Activated CD4-positive, alpha-beta memory T cell treated with anti-CD3 and anti-CD28 coated beads for 36 hours (primary cell): ENCODE measurements at regions of chr3 and their contacts with region 1.

Region 1: GRCh38 chr3:123201566-123202427 is at the start of gene SEC22A:
- DNase-seq: peak; percentile 97
- H3K4me3 Mint-ChIP-seq: peak within 1 kb of the TSS; percentile 87
- H3K27ac Mint-ChIP-seq: peak within 1 kb of the TSS; percentile 86
- H3K4me1 Mint-ChIP-seq: peaks cover 23% of the 10 kb centered on the region
- H3K27me3 Mint-ChIP-seq: no peaks in the 10 kb centered on the region
- total RNA-seq, gene SEC22A: 19.6 to 21.5 TPM

Region 2: DNA sequence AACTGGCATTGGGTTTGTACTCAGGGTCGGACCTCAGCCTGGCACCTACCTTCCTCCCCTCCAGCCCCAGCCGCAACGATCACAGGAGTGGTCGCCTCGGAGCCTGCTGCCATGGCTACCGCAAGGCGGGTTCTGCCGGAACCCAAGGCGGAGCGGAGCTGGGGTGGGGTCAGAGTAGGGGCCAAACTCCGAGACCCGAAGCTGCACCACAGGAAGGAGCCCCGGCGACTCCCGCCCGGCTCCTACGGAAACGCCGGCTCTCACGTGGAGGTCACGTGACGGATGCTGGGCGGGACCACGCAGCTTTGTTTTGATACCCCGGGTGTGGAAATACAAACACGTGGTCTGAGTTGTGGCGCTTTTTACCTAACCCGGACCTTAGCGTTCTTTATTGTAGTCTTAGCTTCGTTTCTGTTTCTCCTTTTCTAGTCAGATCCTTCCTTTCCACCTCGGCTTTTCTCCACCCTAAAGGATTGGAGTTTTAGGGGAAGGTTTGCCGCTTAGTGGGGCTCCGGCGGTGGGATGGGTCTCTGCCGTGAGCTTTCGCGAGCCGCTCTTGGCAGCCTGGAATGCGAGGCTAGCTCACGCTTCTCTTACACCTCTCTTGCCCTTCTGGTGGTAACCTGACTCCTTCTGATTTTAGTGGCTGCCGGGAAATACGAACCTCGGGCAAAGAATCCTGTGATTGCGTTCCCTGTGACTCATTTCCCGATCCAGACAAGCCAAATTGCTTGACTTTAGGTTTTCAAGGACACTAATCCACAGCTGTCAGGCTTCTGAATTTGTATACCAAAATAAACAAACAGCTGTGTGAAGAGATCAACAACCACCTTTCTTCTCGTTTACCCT is 408.0 kb before region 1 on chr3 and contains the start of gene HSPBAP1:
- CTCF ChIA-PET with region 1: no interaction called
- POLR2A ChIA-PET with region 1: no interaction called
- intact Hi-C with region 1: loop called (anchors 5 kb)
- DNase-seq: peak; percentile 93
- H3K4me3 Mint-ChIP-seq: peak within 1 kb of the TSS; percentile 85
- H3K27ac Mint-ChIP-seq: peak within 1 kb of the TSS; percentile 82
- H3K4me1 Mint-ChIP-seq: peaks cover 29% of the 10 kb centered on the region
- H3K27me3 Mint-ChIP-seq: no peaks in the 10 kb centered on the region
- total RNA-seq, gene HSPBAP1: 4.8 TPM

Region 3: GRCh38 chr3:123066896-123067688 is 134.7 kb before region 1 on chr3 and contains the start of gene PDIA5:
- CTCF ChIA-PET with region 1: no interaction called
- POLR2A ChIA-PET with region 1: interaction called, 6 read pairs
- intact Hi-C with region 1: loop called (anchors 2 kb)
- DNase-seq: peak; percentile 84
- H3K4me3 Mint-ChIP-seq: peak within 1 kb of the TSS; percentile 81
- H3K27ac Mint-ChIP-seq: no peak within 1 kb of the TSS
- H3K4me1 Mint-ChIP-seq: peaks cover 30% of the 10 kb centered on the region
- H3K27me3 Mint-ChIP-seq: no peaks in the 10 kb centered on the region
- total RNA-seq, gene PDIA5: 21.7 to 21.8 TPM

Region 4: DNA sequence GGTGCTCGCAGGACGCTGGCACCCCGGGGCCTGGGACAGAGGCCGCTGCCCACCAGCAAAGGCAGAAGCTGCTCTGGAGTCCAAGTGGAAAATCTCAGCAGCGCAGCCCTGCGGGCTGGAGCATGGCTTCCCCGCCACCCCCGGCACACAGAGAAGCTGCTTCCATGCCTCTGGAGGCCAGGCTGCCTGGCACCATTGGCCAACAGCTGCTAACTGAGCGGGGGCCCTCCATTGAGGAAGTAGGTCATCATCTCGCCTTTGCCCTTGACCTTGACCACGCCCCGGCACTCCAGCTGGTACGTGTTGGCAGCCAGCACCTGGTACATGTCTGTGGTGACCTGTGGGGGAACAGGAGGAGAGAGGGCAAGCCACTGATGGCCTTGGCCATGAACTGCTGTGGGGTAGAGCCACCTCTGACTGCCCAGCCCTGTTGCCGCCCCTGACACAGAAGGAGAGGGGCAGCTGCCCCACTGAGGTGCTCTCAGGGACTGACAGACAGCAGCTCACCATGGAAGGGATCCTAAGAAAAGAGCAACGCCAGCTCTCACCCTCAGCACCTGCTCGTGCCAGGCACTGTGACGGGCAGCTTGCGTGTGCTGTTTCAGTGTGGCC is 82.7 kb after region 1 on chr3:
- CTCF ChIA-PET with region 1: no interaction called
- POLR2A ChIA-PET with region 1: no interaction called
- intact Hi-C with region 1: no loop called
- DNase-seq: no peak
- H3K4me3 Mint-ChIP-seq: no peak overlapping the region
- H3K27ac Mint-ChIP-seq: no peak overlapping the region
- H3K4me1 Mint-ChIP-seq: no peaks in the 10 kb centered on the region
- H3K27me3 Mint-ChIP-seq: no peaks in the 10 kb centered on the region